ENCODE measurements at regions of chr3 and their contacts with region 1.

Region 1: GRCh38 chr3:153970741-153971347 is 150.3 kb upstream of the ARHGEF26 start:
- DNase-seq: no peak
- H3K4me3 Mint-ChIP-seq: no peak overlapping the region
- H3K27ac Mint-ChIP-seq: no peak overlapping the region
- H3K4me1 Mint-ChIP-seq: no peaks in the 10 kb centered on the region
- H3K27me3 Mint-ChIP-seq: no peaks in the 10 kb centered on the region
- CTCF ChIP-seq: peak; percentile 38

Region 2: DNA sequence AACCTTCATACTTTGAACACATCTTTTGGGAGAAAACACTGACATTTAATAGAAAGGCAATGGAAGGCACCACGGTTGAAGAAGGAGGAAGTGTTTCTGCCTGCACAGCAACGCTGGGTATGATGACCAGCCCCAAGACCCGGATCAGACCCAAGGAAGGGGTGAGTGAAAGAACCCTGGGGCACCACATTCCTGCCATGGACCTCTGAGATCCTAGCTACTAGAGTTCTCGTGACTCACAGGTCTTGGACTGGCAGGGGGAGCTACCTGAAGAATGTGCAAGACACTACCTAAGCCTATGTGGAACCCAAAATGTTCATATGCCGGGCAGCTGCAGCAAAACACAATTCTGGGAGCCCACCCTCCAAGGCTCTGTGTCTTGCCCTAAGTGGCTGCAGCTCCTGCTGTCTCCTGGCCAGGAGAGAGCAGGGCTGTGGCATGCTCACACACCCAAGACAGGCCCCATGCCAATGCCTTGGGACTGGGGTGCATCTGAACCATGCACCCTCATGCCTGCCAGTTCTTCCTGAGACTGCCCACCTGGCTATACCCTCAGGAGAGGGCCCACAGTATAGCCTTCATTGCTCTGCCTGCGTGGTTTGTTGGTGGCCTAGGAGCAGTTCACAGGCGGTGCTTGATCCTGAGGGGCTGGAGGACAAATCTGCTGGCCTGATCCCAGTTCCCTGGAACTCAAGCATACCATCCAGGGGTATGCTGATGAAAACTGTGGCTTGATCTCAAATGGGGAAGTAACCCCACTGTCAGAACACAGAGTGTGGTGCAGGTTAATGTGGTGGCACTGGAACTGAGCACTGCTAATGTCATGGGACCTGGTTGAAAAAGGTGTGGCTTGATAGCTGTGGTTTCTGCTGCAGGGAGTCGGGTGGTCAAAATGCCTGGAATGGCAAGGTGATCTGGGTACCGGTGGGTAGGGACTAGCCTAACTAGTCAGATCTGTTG is 203.0 kb before region 1 on chr3:
- CTCF ChIA-PET with region 1: no interaction called
- intact Hi-C with region 1: no loop called
- DNase-seq: no peak
- H3K4me3 Mint-ChIP-seq: no peak overlapping the region
- H3K27ac Mint-ChIP-seq: no peak overlapping the region
- H3K4me1 Mint-ChIP-seq: peaks cover 11% of the 10 kb centered on the region
- H3K27me3 Mint-ChIP-seq: no peaks in the 10 kb centered on the region
- CTCF ChIP-seq: no peak

Region 3: GRCh38 chr3:154023148-154023547 is 52.3 kb after region 1 on chr3:
- CTCF ChIA-PET with region 1: no interaction called
- intact Hi-C with region 1: loop called (anchors 2 kb)
- DNase-seq: peak; percentile 57
- H3K4me3 Mint-ChIP-seq: no peak overlapping the region
- H3K27ac Mint-ChIP-seq: peak overlapping the region; percentile 25
- H3K4me1 Mint-ChIP-seq: peaks cover 14% of the 10 kb centered on the region
- H3K27me3 Mint-ChIP-seq: no peaks in the 10 kb centered on the region
- CTCF ChIP-seq: no peak